ENCODE measurements at regions of chrX and their contacts with region 1.

Region 1: GRCh38 chrX:55160685-55161552 is 59.2 kb upstream of the PAGE5 start:
- DNase-seq: peak; percentile 91
- H3K4me3 ChIP-seq: peak overlapping the region; percentile 62 to 83 (median 65)
- H3K27ac ChIP-seq: peak overlapping the region; percentile 74
- H3K4me1 ChIP-seq: peaks cover 5% of the 10 kb centered on the region
- H3K27me3 ChIP-seq: no peaks in the 10 kb centered on the region
- CTCF ChIP-seq: peak; percentile 24 to 52
- POLR2A ChIP-seq: peak; percentile 77

Region 2: DNA sequence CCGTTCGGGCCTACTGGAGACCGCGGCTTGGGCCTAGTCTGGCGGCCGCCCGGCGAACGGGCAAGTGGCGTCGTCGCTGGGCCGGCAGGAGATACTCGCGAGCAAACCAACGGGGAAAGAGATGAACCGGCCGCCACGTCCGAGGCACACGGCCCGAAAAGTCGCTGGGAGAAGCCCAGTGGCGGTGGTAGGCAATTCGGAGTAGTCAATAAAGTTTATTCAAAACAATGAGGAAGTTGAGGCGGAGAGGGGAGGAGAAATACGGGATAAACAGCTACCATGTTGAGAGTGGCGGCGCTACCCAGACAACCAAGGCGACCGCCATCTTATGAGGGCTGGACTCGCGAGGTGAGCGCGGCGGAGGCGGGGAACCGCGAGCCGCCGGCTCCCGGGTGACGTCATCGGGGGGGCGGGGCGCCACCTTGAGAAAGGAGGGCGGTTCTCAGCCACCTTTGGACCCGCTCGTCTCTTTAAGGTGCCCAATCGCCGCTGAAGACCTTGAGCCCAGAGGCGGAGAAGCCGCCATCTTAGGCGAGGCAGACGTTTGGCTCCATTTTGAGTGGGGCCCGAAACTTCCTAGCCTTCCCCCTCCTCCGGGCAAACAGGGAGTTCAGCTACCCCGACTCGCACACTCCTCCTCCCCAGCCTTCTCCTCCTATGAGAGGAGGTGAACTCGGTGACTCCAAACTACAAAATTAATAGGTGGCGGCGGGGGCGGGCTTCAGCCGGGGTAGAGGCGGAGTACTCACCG is 1116.6 kb before region 1 on chrX and contains the start of gene PHF8:
- CTCF ChIA-PET with region 1: no interaction called
- POLR2A ChIA-PET with region 1: no interaction called
- dilution Hi-C with region 1: no loop called
- intact Hi-C with region 1: loop called (anchors 10 kb)
- DNase-seq: peak; percentile 95
- H3K4me3 ChIP-seq: peak within 1 kb of the TSS; percentile 66 to 87 (median 70)
- H3K27ac ChIP-seq: peak within 1 kb of the TSS; percentile 81
- H3K4me1 ChIP-seq: peaks cover 13% of the 10 kb centered on the region
- H3K27me3 ChIP-seq: no peaks in the 10 kb centered on the region
- CTCF ChIP-seq: no peak
- POLR2A ChIP-seq: peak; percentile 70
- total RNA-seq, gene PHF8: 23.2 and 25.5 TPM in 2 replicates

Region 3: DNA sequence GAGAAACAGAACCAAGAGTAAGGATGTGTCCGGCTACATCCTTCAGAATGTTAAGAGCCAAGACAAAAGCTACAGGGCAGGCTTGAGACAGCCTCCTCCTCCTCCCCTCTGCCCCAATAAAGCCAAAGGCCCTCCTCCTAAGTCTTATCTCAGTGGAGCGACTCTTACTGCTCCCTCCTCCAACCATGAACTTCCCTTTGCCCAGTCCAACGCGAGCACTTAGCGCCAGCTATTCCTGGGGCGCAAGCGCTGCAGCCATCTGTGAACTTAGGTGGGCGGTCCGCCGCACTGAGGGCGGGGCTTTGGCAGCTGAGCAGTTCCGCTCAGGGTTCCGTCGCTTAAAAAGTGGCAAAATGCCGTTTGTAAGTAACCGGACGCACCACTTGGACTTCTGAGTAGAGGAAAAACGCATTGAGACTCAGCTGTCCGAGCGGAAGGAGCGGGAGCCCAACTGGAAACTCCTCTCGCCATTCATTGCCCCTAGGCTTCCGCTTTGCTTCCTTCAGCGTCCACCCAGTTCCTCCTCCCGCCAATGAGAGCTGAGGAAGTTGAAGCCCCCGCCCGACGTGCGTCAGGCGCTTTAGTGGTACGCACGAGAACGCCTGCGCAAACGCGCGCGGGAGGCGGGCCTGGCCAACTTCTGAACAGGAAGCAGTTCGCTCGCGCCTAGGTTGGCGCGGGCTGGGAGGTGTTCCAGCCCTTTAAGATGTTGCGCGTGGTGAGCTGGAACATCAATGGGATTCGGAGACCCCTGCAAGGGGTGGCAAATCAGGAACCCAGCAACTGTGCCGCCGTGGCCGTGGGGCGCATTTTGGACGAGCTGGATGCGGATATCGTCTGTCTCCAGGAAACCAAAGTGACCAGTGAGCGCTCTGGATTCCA is 161.0 kb before region 1 on chrX and contains the start of gene APEX2:
- CTCF ChIA-PET with region 1: no interaction called
- POLR2A ChIA-PET with region 1: no interaction called
- dilution Hi-C with region 1: no loop called
- intact Hi-C with region 1: loop called (anchors 1 kb)
- DNase-seq: peak; percentile 92
- H3K4me3 ChIP-seq: peak within 1 kb of the TSS; percentile 57 to 93 (median 74)
- H3K27ac ChIP-seq: peak within 1 kb of the TSS; percentile 90
- H3K4me1 ChIP-seq: peaks cover 26% of the 10 kb centered on the region
- H3K27me3 ChIP-seq: no peaks in the 10 kb centered on the region
- CTCF ChIP-seq: no peak
- POLR2A ChIP-seq: peak; percentile 72
- total RNA-seq, gene APEX2: 22.7 and 26.6 TPM in 2 replicates

Region 4: DNA sequence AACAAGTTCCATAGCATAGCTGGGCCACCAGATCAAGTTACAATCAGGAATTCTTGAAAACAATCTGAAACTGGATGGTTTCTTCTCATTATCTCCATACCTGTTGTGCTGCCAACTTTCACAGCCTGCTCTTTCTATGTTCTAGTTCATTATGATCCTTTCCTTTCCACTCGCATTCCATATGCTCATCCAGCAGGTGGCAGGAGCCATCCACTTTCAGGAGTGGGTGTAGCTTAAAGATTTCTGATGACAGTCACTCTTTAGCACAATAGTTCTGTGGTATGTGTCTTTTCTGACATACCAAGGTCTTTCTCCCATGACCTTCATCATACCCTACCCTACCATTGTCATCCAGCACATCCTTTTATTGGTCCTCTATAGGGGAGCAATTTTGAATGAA is 25.7 kb before region 1 on chrX:
- CTCF ChIA-PET with region 1: interaction called, 4 read pairs
- POLR2A ChIA-PET with region 1: interaction called, 5 read pairs
- dilution Hi-C with region 1: no loop called
- intact Hi-C with region 1: loop called (anchors 1 kb)
- DNase-seq: peak; percentile 59
- H3K4me3 ChIP-seq: no peak overlapping the region
- H3K27ac ChIP-seq: no peak overlapping the region
- H3K4me1 ChIP-seq: no peaks in the 10 kb centered on the region
- H3K27me3 ChIP-seq: no peaks in the 10 kb centered on the region
- CTCF ChIP-seq: peak; percentile 35 to 37
- POLR2A ChIP-seq: no peak

Region 5: GRCh38 chrX:55201930-55202579 is 41.1 kb after region 1 on chrX:
- CTCF ChIA-PET with region 1: no interaction called
- POLR2A ChIA-PET with region 1: no interaction called
- dilution Hi-C with region 1: no loop called
- intact Hi-C with region 1: no loop called
- DNase-seq: no peak
- H3K4me3 ChIP-seq: no peak overlapping the region
- H3K27ac ChIP-seq: no peak overlapping the region
- H3K4me1 ChIP-seq: no peaks in the 10 kb centered on the region
- H3K27me3 ChIP-seq: no peaks in the 10 kb centered on the region
- CTCF ChIP-seq: no peak
- POLR2A ChIP-seq: no peak

Region 6: DNA sequence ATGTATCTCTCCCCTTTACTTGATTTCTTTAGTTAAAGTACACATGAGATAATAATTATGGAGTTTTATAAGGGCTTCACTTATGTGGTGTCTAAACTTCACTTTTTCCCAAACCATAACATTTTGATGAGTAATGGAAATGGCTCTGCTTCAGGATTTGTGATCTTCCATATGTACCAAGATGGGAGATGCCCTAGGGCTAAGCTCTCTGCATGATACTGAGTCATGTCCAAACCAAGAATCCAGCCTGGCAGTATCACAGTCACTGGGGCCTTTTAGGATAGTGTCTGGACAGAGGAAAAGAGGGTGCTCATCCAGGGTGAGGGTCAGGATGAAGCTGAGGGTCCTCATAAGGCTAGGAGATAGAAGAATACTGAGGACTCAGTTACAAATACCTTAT is 151.7 kb after region 1 on chrX:
- CTCF ChIA-PET with region 1: no interaction called
- POLR2A ChIA-PET with region 1: no interaction called
- dilution Hi-C with region 1: no loop called
- intact Hi-C with region 1: no loop called
- DNase-seq: no peak
- H3K4me3 ChIP-seq: no peak overlapping the region
- H3K27ac ChIP-seq: no peak overlapping the region
- H3K4me1 ChIP-seq: no peaks in the 10 kb centered on the region
- H3K27me3 ChIP-seq: no peaks in the 10 kb centered on the region
- CTCF ChIP-seq: no peak
- POLR2A ChIP-seq: no peak

Measured in endothelial cell of umbilical vein (primary cell).